BJ (cell line): ENCODE measurements at regions of chr3 and their contacts with region 1.

Region 1: DNA sequence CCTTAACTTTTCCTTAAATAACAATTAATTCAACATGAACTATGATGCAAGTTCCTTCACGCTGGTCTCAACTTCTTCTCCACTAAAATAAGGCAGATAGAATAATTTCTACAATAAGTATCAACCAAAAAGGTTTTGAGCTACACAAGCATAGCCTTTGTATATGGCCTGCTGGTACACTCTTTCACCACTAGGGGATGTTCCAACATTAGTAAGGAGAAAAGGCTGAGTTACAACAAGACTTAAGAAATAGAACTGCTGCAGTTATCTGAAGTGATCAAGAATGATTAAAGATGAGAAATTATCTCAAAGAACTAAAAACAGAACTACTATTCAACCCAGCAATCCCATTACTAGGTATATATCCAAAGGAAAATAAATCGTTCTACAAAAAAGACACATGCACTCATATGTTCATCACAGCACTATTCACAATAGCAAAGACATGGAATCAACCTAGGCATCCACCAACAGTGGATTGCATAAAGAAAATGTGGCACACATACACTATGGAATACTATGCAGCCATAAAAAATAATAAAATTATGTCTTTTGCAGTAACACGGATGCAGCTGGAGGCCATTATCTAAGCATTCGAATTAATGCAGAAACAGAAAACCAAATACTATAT is 14.4 kb downstream of the ATP13A3 start:
- DNase-seq: no peak
- H3K4me3 ChIP-seq: no peak overlapping the region
- H3K27me3 ChIP-seq: no peaks in the 10 kb centered on the region
- CTCF ChIP-seq: peak; percentile 99

Region 2: GRCh38 chr3:194389269-194389668 is 83.1 kb before region 1 on chr3:
- CTCF ChIA-PET with region 1: no interaction called
- POLR2A ChIA-PET with region 1: no interaction called
- DNase-seq: no peak
- H3K4me3 ChIP-seq: no peak overlapping the region
- H3K27me3 ChIP-seq: peaks cover 4% of the 10 kb centered on the region; the same call in 1 of the 2 replicates
- CTCF ChIP-seq: no peak

Region 3: DNA sequence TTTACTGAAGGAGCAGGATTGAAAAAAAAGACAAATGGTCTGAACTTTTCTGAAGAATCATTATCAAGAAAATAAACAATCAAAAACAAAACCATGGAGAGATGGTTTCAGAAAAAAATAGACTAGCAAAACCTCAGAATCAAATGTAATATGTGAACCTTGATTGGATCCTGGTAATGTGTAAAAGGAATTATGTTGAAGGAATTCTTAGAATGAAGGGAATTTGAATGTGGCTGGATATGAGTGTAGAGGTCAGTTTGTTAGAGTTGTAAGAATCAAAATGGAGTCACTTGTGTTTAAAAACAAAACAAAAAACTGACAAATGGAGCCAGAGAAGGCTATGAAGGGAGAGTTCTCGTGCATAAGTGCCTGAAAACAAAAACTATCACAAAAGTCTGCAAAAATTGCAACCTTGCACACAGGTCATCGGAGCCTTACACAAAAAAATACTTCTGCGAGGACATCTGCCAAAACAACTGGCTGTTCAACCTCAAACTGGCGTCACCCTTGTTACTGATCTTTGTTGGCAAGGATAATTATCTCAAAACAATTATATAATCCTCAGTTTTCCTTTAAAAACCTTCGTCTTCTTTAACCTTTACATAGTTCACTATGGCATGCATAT is 33.5 kb after region 1 on chr3:
- CTCF ChIA-PET with region 1: no interaction called
- POLR2A ChIA-PET with region 1: interaction called, 14 read pairs
- DNase-seq: no peak
- H3K4me3 ChIP-seq: no peak overlapping the region
- H3K27me3 ChIP-seq: no peaks in the 10 kb centered on the region
- CTCF ChIP-seq: no peak

Region 4: GRCh38 chr3:194573691-194574437 is 101.5 kb after region 1 on chr3:
- CTCF ChIA-PET with region 1: interaction called, 49 read pairs
- POLR2A ChIA-PET with region 1: no interaction called
- DNase-seq: no peak
- H3K4me3 ChIP-seq: no peak overlapping the region
- H3K27me3 ChIP-seq: no peaks in the 10 kb centered on the region
- CTCF ChIP-seq: peak; percentile 47

Region 5: DNA sequence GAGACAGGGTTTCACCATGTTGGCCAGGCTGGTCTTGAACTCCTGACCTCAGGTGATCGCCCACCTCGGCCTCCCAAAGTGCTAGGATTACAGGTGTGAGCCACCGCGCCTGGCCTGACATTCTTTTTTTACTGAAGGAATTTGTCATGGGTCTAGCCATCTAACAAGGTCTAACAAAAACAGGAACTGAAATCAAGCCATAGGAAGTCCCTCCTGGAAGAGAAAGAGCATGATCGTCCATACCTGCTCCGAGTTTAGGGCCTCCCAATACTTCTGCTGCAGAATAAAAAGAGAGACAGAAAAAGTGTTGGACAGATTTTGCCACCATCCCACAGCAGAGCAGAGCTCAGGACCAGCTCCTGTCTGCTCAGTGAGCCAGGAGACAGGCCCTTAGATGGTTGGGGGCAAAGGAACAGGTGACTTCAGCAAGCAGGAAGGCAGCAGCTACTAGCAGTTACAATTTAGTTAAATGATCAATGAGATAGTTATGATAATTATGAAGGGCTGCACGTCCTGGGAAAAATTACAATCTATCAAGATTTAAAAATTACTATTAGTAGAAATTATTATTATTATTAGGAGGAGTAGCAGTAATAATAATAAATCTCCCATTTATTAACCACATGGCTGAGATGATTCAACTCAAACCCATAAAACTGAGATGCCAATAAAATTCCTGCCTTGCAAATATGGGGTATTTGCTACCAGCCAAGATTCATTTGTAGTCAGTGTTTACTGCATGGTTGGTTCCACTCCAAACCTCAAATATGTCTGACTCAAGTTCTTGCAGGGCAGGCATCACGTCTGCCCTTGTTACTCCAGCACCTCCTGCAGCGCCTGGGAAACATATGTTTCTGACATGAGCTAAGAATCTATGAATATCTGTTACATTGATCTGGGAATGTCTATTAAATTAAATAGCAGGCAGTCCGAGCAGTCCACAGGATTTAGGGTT is 120.7 kb after region 1 on chr3:
- CTCF ChIA-PET with region 1: interaction called, 62 read pairs
- POLR2A ChIA-PET with region 1: no interaction called
- DNase-seq: peak; percentile 99
- H3K4me3 ChIP-seq: no peak overlapping the region
- H3K27me3 ChIP-seq: no peaks in the 10 kb centered on the region
- CTCF ChIP-seq: no peak